ENCODE measurements at regions of chr2 and their contacts with region 1.

Region 1: GRCh38 chr2:127415593-127416505 is 2.4 kb upstream of the PROC start:
- DNase-seq: peak; percentile 91
- H3K4me3 Mint-ChIP-seq: peak overlapping the region; percentile 54
- H3K27ac Mint-ChIP-seq: no peak overlapping the region
- H3K4me1 Mint-ChIP-seq: peaks cover 34% of the 10 kb centered on the region
- H3K27me3 Mint-ChIP-seq: peaks cover 13% of the 10 kb centered on the region

Region 2: GRCh38 chr2:127226520-127227263 is 189.2 kb before region 1 on chr2:
- CTCF ChIA-PET with region 1: no interaction called
- POLR2A ChIA-PET with region 1: no interaction called
- intact Hi-C with region 1: loop called (anchors 2 kb)
- DNase-seq: peak; percentile 87
- H3K4me3 Mint-ChIP-seq: peak overlapping the region; percentile 53
- H3K27ac Mint-ChIP-seq: peak overlapping the region; percentile 73
- H3K4me1 Mint-ChIP-seq: peaks cover 18% of the 10 kb centered on the region
- H3K27me3 Mint-ChIP-seq: peaks cover 40% of the 10 kb centered on the region

Region 3: DNA sequence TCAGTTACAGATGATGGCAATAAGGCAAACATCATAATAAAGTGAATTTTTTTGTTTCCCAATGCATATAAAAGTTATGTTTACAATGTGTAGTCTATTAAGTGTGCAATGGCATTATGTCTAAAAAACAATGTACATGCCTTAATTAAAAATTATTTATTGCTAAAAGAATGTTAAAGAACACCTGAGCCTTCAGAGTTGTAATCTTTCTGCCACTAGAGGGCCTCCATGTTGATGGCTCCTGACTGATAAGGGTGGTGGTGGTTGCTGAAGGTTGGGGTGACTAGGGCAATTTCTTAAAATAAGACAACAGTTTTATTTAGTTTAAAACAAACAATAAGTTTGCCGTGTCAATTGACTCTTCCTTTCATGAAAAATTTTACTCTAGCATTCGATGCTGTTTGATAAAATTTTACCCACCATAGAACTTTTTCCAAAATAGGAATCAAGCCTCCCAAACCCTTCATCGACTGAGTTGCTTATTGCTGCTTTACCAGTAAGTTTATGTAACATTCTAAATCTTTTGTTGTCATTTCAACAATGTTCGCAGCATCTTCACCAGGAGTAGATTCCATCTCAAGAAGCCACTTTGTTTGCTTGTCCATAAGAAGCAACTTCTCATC is 60.4 kb before region 1 on chr2:
- CTCF ChIA-PET with region 1: interaction called, 9 read pairs
- POLR2A ChIA-PET with region 1: no interaction called
- intact Hi-C with region 1: loop called (anchors 1 kb)
- DNase-seq: peak; percentile 27
- H3K4me3 Mint-ChIP-seq: no peak overlapping the region
- H3K27ac Mint-ChIP-seq: no peak overlapping the region
- H3K4me1 Mint-ChIP-seq: peaks cover 44% of the 10 kb centered on the region
- H3K27me3 Mint-ChIP-seq: no peaks in the 10 kb centered on the region

Region 4: GRCh38 chr2:127365211-127365643 is 50.6 kb before region 1 on chr2:
- CTCF ChIA-PET with region 1: interaction called, 12 read pairs
- POLR2A ChIA-PET with region 1: no interaction called
- intact Hi-C with region 1: no loop called
- DNase-seq: no peak
- H3K4me3 Mint-ChIP-seq: no peak overlapping the region
- H3K27ac Mint-ChIP-seq: no peak overlapping the region
- H3K4me1 Mint-ChIP-seq: peaks cover 52% of the 10 kb centered on the region
- H3K27me3 Mint-ChIP-seq: no peaks in the 10 kb centered on the region

Region 5: DNA sequence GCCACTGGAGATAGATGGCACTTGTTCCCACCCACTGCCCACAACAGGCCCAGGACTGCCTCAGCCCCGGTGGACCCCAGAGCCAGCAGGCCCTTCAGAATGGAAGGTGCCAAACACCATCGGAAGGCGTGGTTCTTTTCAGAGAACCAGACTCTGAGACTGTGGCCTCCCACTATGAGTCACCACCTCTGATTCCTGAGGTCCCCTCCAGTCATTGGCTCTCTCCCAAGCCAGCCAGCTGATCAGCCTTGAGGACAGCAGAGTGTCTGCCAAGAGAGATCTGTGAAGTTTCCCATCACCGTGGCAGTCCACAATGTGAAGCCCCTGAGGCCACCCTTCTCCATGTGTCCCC is 17.6 kb before region 1 on chr2:
- CTCF ChIA-PET with region 1: interaction called, 12 read pairs
- POLR2A ChIA-PET with region 1: interaction called, 4 read pairs
- intact Hi-C with region 1: no loop called
- DNase-seq: peak; percentile 80
- H3K4me3 Mint-ChIP-seq: no peak overlapping the region
- H3K27ac Mint-ChIP-seq: peak overlapping the region; percentile 47
- H3K4me1 Mint-ChIP-seq: peaks cover 22% of the 10 kb centered on the region
- H3K27me3 Mint-ChIP-seq: peaks cover 5% of the 10 kb centered on the region

Region 6: GRCh38 chr2:127455566-127456493 is 40.0 kb after region 1 on chr2:
- CTCF ChIA-PET with region 1: interaction called, 3 read pairs
- POLR2A ChIA-PET with region 1: no interaction called
- intact Hi-C with region 1: loop called (anchors 1 kb)
- DNase-seq: peak; percentile 60
- H3K4me3 Mint-ChIP-seq: peak overlapping the region; percentile 5
- H3K27ac Mint-ChIP-seq: peak overlapping the region; percentile 74
- H3K4me1 Mint-ChIP-seq: peaks cover 25% of the 10 kb centered on the region
- H3K27me3 Mint-ChIP-seq: peaks cover 3% of the 10 kb centered on the region

Region 7: DNA sequence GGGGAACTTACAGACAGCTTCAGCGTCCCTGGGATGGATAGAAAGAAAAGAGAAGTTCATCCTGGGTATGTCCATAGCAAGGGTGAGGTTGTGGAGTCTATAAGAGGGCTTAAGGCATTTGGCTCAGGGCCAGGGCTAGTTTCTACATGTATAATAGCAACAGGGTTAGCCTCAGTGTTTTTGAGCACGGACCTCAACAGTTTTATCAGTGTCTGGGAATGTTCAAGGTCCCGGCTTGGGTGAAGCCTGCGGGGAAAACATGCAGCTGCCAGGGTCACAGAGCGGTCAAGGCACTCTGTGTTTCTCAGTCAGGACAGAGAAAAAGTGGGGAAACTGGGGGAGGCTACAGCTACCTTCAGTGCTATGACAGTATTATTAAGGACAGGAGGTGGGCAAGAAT is 1330.5 kb after region 1 on chr2:
- CTCF ChIA-PET with region 1: no interaction called
- POLR2A ChIA-PET with region 1: no interaction called
- intact Hi-C with region 1: no loop called
- DNase-seq: no peak
- H3K4me3 Mint-ChIP-seq: no peak overlapping the region
- H3K27ac Mint-ChIP-seq: no peak overlapping the region
- H3K4me1 Mint-ChIP-seq: no peaks in the 10 kb centered on the region
- H3K27me3 Mint-ChIP-seq: peaks cover 1% of the 10 kb centered on the region